ENCODE measurements at regions of chr17 and their contacts with region 1.

Region 1: DNA sequence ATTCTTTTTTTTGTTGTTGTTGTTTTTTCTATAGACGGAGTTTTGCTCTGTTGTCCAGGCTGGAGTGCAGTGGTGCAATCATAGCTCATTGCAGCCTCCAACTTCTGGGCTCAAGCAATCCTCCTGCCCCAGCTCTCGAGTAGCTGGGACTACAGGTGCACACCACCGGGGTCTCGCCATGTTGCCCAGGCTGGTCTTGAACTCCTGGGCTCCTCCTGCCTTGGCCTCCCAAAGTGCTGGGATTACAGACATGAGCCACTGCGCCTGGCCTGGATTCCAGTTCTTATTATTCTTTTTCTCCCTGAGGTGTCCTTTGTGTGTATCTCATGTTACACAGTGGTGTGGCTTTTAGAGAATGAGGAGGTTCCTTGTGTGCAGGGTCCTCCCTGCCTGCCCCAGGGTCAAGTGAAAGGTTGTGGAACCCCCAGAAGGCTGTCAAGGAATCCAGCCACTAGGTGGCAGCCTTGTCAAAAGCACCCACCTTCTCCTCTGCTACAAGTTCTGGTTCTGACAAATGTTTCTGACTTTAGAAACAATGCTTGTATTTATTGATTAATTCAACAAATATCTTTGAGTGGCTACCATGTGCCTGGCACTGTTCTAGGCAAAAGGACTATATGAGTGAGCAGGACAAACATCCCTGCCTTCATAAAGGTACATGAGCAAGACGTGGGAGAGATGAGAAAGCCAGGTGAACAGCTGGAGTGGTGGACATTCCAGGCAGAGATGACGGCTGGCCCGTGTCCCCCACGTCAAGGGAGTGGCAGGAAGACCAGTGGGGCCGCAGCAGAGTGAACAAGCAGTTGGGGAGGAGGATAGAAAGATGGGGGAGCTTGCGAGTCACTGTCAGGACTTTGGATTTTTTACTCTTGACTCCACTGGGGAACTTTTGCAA is 112.4 kb downstream of the SPECC1 start:
- DNase-seq: peak; percentile 65
- H3K4me3 ChIP-seq: no peak overlapping the region
- H3K27ac ChIP-seq: no peak overlapping the region
- H3K4me1 ChIP-seq: no peaks in the 10 kb centered on the region
- H3K27me3 ChIP-seq: no peaks in the 10 kb centered on the region
- CTCF ChIP-seq: peak; percentile 57 to 87 (median 70)
- POLR2A ChIP-seq: no peak

Region 2: GRCh38 chr17:19992803-19993713 is 128.5 kb before region 1 on chr17:
- intact Hi-C with region 1: loop called (anchors 5 kb)
- DNase-seq: peak; percentile 92 to 94
- H3K4me3 ChIP-seq: no peak overlapping the region
- H3K27ac ChIP-seq: no peak overlapping the region
- H3K4me1 ChIP-seq: peaks cover 0 to 3% of the 10 kb centered on the region in 2 donors
- H3K27me3 ChIP-seq: no peaks in the 10 kb centered on the region
- CTCF ChIP-seq: peak; percentile 50 to 92 (median 70)
- POLR2A ChIP-seq: no peak

Region 3: GRCh38 chr17:20083460-20083859 is 38.1 kb before region 1 on chr17:
- intact Hi-C with region 1: no loop called
- DNase-seq: no peak
- H3K4me3 ChIP-seq: no peak overlapping the region
- H3K27ac ChIP-seq: no peak overlapping the region
- H3K4me1 ChIP-seq: no peaks in the 10 kb centered on the region
- H3K27me3 ChIP-seq: no peaks in the 10 kb centered on the region
- CTCF ChIP-seq: no peak
- POLR2A ChIP-seq: no peak

Region 4: GRCh38 chr17:20226814-20227482 is 105.3 kb after region 1 on chr17:
- intact Hi-C with region 1: loop called (anchors 5 kb)
- DNase-seq: peak; percentile 74 to 83
- H3K4me3 ChIP-seq: no peak overlapping the region
- H3K27ac ChIP-seq: no peak overlapping the region
- H3K4me1 ChIP-seq: peaks cover 0 to 3% of the 10 kb centered on the region in 2 donors
- H3K27me3 ChIP-seq: no peaks in the 10 kb centered on the region
- CTCF ChIP-seq: peak in 5 of 6 experiments; percentile 50 to 84 (median 64)
- POLR2A ChIP-seq: no peak

Region 5: GRCh38 chr17:20315821-20316220 is 194.2 kb after region 1 on chr17:
- intact Hi-C with region 1: loop called (anchors 5 kb)
- DNase-seq: no peak
- H3K4me3 ChIP-seq: no peak overlapping the region
- H3K27ac ChIP-seq: no peak overlapping the region
- H3K4me1 ChIP-seq: peaks cover 0 to 4% of the 10 kb centered on the region in 2 donors
- H3K27me3 ChIP-seq: no peaks in the 10 kb centered on the region
- CTCF ChIP-seq: no peak
- POLR2A ChIP-seq: no peak